ENCODE measurements at regions of chr17 and their contacts with region 1.

Region 1: DNA sequence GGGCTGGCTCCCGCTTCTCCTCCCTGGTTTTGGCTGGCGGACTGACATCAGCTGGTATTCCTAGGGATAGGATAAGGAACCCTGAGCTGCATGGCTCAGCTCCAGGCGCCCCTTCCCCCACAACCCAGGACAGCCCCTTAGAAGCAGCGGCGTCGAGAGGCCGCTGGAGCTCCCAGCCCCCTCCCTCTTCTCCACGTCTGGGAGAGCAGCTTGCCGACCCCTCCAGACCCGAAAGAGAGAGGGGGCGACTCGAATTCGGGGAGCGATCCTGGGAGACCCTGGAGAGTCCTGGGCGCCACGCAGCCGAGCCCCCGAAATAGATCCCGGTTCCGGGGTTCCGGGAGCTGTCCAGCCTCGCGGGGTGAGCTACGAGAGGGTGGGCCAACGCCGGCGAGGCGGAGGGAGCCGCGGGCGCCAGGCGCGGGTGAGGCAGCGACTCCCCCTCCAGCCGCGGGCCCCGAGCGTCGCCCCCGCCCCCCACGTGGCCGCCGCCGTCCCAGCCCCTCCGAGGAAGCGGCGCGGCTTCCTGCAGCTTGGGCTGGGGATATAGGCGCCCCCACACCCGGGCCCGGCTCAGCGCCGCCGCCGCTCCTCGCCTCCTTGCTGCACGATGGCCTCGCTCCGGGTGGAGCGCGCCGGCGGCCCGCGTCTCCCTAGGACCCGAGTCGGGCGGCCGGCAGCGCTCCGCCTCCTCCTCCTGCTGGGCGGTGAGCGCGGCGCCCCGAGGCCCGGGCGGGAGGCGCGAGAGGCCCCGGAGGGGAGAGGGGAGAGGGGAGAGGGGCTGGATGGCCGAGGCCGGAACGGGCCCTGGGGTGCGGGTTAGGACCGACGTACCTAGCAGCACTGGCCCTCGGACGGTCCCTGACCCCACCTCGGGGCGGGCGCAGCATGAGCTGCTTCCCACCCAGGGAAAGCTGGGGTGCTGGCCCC is at the start of gene RAMP2:
- DNase-seq: peak; percentile 59
- ATAC-seq: peak; percentile 60
- total RNA-seq, gene RAMP2: 38.2 TPM

Region 2: GRCh38 chr17:42586514-42587230 is 174.2 kb before region 1 on chr17:
- intact Hi-C with region 1: loop called (anchors 10 kb)
- DNase-seq: no peak
- ATAC-seq: no peak

Region 3: DNA sequence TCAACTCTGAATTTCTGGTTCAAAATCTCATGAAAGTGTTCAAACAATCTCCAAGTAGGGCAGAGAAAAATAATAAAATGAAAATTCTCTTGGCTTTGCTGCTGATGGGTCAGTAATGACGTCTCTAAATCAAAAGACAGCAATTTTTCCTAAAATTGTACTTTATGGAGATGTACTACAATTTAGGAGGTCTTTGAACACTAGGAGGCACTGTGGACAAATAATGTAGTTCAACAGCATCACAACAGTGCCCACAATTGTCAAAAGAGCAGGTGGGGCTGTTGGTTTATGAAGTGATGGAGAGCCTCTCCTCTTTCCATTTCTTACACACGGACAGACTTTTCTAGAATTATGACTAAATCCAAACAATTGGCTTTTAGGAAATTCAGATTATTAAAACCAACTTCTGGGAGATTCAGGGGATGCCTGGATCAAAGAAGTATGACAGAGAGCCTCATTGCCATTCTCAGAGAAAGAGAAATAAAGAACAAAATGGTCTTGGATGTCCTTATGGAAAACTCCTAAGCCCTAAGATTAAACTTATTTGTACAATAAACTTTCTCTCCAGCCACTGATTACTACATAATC is 39.8 kb before region 1 on chr17:
- intact Hi-C with region 1: loop called (anchors 2 kb)
- DNase-seq: no peak
- ATAC-seq: peak; percentile 90

Measured in Right ventricle myocardium superior (tissue), 1 donor.